Activated CD4-positive, alpha-beta T cell treated with anti-CD3 and anti-CD28 coated beads, Interleukin-2, amount 10 ng/mL, durations not matched to agents 24 days and 14 days (primary cell): ENCODE measurements at regions of chr10 and their contacts with region 1.

Region 1: GRCh38 chr10:132446661-132447194 is 49.7 kb downstream of the PWWP2B start:
- DNase-seq: peak; percentile 91
- H3K4me3 Mint-ChIP-seq: peak overlapping the region; percentile 76
- H3K27ac Mint-ChIP-seq: peak overlapping the region; percentile 97
- H3K4me1 Mint-ChIP-seq: peaks cover 29% of the 10 kb centered on the region
- H3K27me3 Mint-ChIP-seq: no peaks in the 10 kb centered on the region

Region 2: DNA sequence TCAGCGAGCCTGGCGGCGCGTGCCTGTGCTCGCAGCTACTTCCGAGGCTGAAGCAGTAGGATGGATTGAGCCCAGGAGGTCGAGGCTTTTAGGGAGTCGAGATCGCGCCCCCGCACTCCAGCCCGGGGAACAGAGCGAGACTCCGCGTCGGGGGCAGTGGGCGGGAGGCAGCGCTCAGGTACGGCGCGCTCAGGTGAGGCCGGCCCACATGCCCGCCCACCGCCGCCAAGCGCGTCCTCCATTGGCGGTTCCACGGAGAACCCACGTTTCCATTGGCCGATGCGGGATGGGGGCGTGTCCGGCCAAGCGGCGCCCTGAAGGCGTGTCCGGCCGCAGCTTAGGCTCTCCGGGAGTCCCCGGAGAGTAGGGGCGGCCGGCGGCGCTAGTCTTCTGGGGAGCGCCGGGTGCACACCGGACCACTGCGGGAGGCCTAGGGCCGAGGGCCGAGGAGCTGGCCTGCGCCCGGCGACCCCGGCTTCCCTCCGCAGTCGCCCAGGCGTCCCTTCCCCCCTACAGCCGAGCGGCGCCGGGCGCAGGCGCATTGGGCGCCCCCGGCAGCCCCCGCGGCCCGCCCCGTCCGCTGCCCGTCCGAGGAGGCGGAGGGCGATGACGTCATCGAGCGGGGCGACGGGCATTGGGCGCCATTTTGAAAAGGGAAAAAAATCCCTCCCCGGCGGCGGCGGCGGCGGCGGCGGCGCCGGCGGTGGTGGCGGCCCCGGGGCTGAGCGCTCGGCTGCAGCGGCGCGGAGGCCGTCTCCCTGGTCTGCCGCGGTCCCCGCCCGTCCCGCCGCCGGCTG is 546.2 kb before region 1 on chr10 and contains the start of gene PPP2R2D:
- intact Hi-C with region 1: loop called (anchors 10 kb)
- DNase-seq: peak; percentile 99
- H3K4me3 Mint-ChIP-seq: peak within 1 kb of the TSS; percentile 90
- H3K27ac Mint-ChIP-seq: peak within 1 kb of the TSS; percentile 79
- H3K4me1 Mint-ChIP-seq: peaks cover 47% of the 10 kb centered on the region
- H3K27me3 Mint-ChIP-seq: peaks cover 20% of the 10 kb centered on the region
- total RNA-seq, gene PPP2R2D: 33.2 and 36.2 TPM in 2 replicates

Region 3: GRCh38 chr10:132185601-132186487 is 260.9 kb before region 1 on chr10:
- intact Hi-C with region 1: loop called (anchors 10 kb)
- DNase-seq: peak; percentile 93
- H3K4me3 Mint-ChIP-seq: peak overlapping the region; percentile 80
- H3K27ac Mint-ChIP-seq: no peak overlapping the region
- H3K4me1 Mint-ChIP-seq: peaks cover 16% of the 10 kb centered on the region
- H3K27me3 Mint-ChIP-seq: peaks cover 37% of the 10 kb centered on the region

Region 4: DNA sequence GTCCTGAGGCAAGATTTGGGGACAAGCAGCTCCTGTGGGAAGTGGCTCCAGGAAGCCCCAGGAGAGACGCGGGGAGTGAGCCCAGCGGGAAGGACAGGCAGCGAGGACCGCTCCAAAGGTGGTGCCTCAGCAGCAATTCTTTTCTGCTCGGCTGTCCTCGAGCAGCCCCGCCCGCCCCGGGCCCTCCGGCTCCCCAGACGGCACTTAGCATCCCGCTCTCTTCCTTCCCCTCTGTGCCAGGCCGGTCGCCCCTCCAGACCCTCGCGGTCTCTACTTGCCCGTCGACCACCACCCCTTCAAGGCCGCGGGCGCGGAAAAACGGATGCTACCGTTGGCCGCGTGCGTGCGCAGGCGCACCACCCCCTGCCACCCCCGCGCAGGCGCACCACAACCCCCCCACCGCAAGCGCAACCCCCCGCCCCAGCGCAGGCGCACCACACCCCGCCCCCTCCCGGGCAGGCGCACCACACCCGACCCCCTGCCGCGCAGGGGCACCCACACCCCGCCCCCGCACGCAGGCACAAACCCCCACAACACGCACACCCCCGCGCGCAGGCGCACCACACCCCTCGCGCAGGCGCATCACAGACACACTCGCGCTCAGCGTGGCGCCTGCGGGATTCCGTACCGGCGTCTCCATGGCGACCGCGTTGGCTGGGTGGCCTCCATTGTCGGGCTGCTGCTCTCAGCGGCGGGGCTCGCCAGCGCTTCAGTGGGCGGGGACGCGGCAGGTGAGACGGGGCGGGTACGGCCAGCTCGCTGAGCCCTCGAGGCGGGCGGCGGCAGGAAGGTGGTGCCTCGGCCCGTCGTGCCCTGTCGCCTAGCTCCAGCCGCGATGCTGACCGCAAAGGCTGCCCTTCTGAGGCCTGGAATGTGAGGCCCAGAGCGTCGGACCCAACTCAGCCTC is 114.9 kb before region 1 on chr10 and contains the start of gene LRRC27:
- intact Hi-C with region 1: loop called (anchors 2 kb)
- DNase-seq: peak; percentile 100
- H3K4me3 Mint-ChIP-seq: peak within 1 kb of the TSS; percentile 88
- H3K27ac Mint-ChIP-seq: peak within 1 kb of the TSS; percentile 96
- H3K4me1 Mint-ChIP-seq: peaks cover 50% of the 10 kb centered on the region
- H3K27me3 Mint-ChIP-seq: peaks cover 4% of the 10 kb centered on the region
- total RNA-seq, gene LRRC27: 2.3 and 3.3 TPM in 2 replicates

Region 5: GRCh38 chr10:132396495-132397035 is 50.2 kb before region 1 on chr10:
- intact Hi-C with region 1: loop called (anchors 2 kb)
- DNase-seq: peak; percentile 91
- H3K4me3 Mint-ChIP-seq: no peak overlapping the region
- H3K27ac Mint-ChIP-seq: no peak overlapping the region
- H3K4me1 Mint-ChIP-seq: peaks cover 9% of the 10 kb centered on the region
- H3K27me3 Mint-ChIP-seq: peaks cover 6% of the 10 kb centered on the region